Astrocyte of the cerebellum (primary cell): ENCODE measurements at regions of chr6 and their contacts with region 1.

Region 1: GRCh38 chr6:31225735-31226134 is 46.2 kb downstream of the HLA-C start:
- DNase-seq: no peak
- H3K4me3 ChIP-seq: no peak overlapping the region
- CTCF ChIP-seq: no peak

Region 2: DNA sequence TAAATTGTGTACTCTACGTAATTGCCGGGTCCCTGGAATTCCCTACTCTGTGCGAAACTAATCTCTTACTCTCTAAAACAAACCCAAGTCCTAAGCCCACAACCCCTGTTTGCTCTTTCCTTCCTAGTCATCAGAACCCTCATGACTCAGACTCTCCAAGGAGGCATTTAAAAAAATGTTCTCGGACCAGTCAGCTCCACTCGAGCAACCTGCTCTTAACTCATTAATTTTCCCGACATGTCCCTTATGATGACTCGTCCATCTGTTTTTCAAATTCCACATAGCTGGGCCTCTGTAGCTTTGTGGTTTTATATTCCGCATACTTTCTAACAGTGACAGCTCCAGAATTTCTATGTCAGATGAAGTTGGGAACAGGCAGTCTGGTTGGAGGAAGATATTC is 218.0 kb before region 1 on chr6:
- in situ Hi-C with region 1: no loop called
- DNase-seq: peak; percentile 84
- H3K4me3 ChIP-seq: no peak overlapping the region
- CTCF ChIP-seq: no peak

Region 3: GRCh38 chr6:31441365-31442267 is 215.9 kb after region 1 on chr6:
- in situ Hi-C with region 1: loop called (anchors 10 kb)
- DNase-seq: peak; percentile 6
- H3K4me3 ChIP-seq: no peak overlapping the region
- CTCF ChIP-seq: peak; percentile 80